AG04449 (cell line): ENCODE measurements at regions of chr4 and their contacts with region 1.

Region 1: DNA sequence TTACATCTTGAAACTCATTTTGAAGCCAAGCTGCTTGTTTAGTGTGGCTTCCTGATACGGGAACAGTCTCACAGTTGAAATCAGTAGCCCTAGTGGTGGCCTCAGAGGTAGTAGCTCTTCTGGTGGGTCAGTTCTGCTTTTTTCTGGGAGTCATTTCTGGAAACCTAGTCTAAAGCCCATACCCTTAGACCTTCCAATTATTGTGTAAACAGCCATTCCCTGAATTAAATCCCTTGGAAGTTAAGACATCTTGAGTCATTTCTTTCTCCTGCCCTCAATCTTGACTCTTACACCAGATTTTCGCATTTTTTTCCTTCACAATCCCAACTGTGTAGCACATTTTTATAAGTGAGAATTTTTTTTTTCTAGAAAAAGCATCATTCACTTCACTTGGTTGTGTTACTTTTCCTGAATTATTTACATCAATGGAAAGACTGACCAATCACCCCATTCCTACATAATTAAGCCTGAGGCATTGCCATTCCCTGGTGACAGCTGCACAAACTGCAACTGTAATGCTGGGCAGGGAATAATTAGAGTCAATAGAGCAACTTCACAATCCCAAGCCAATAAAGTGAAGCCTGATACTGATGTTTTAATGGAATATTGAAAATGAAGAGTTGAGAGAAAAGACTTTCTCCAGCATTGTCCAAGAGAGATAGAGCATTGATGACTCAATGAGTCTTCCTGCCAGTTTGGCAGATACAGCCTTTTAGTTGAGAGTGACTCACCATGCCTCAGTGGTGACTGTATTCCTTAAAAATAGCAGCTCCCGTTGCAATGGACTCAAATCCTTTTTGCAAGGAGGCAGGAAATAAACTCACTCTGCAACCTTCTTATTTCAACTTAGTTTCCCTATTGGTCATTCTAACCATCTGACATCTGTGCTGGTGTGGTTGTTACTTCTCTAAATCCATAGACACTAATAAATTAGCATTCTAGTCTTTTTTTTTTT is 13.0 kb upstream of the SEPSECS start:
- DNase-seq: peak; percentile 98
- H3K4me3 ChIP-seq: no peak overlapping the region
- CTCF ChIP-seq: no peak

Region 2: DNA sequence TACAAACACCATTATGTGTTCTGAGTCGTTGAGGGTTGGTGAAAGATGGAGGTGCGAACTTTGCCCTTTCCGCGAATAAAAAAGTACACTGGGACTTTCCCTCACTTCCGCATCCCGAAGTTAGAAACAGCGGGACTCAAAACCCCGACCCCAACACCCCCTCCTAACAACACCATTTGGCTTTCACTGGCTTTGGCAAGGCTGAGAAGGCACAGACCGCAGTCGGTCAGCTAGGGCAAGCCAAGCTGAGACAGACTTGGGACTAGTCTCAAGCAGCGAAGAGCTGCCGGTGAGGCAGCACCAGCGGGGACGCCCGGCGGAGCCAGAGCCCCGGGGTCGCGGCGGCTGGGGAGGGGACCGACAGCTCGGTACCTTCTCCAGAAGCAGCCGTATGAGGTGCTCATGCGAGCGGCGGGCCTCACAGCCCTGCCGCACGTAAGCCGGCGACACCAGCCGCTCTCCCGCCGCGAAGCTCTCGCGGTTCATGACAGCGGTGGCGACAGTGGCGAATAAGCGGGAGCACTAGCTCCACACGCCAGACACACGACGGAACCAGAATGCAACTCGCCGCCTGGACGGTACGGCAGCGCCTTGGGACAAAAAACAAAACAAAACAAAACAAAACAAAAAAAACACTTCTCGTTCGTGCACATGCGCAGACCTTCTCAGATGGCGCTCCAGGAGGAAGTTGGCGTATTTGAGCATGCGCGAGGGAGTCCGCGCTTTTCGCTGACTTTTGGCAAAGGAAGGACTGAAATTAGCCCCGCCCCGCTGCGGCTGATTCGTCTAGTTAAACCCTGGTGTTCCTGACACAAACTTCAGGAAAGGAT is 13.1 kb before region 1 on chr4 and contains the start of gene SEPSECS:
- CTCF ChIA-PET with region 1: interaction called, 16 read pairs
- POLR2A ChIA-PET with region 1: interaction called, 8 read pairs
- DNase-seq: peak; percentile 70
- H3K4me3 ChIP-seq: peak within 1 kb of the TSS; percentile 84
- CTCF ChIP-seq: no peak

Region 3: GRCh38 chr4:25654031-25654970 is 481.1 kb after region 1 on chr4:
- CTCF ChIA-PET with region 1: no interaction called
- POLR2A ChIA-PET with region 1: no interaction called
- DNase-seq: no peak
- H3K4me3 ChIP-seq: no peak overlapping the region
- CTCF ChIP-seq: no peak